Lower leg skin (tissue), 4 donors: ENCODE measurements at regions of chr9 and their contacts with region 1.

Region 1: DNA sequence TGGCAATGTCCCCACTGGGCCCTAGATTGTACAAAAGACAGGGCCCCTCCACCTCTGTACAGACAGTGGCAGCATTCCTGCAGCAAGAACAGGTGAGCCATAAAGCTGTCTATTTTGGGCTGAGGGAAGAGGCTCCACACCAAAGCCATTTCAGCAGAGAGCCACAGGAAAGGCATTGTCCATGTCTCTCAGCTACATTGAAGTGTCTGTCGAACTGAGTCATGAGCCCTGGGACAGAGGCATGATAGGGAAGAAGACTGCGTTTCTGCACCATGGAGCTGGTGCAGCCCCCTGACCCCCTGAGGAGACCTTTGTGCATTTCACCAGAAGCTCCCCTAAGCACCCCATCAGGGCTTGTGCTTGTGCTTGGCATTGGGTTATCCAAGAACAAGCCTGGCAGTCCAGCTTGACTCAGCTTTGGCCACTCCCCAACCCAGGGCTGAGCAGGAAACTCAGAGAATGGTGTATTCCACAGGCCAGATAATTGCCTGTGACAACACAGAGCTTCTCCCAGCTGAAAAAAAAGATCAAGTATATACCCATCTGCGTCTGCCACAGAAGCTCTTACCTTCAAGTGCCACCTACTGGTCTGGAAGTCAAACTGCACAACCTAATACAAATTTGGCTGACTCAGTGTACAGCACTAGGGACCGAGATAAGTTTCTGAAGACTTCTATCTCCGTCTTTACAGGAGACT is 5.9 kb upstream of the FRMD3 start:
- DNase-seq: no peak
- H3K4me3 ChIP-seq: no peak overlapping the region
- CTCF ChIP-seq: peak in 1 of 3 donors; percentile 26
- POLR2A ChIP-seq: no peak

Region 2: GRCh38 chr9:83334320-83334719 is 209.8 kb before region 1 on chr9:
- intact Hi-C with region 1: loop called (anchors 5 kb)
- DNase-seq: peak; percentile 65 to 94
- H3K4me3 ChIP-seq: no peak overlapping the region
- CTCF ChIP-seq: no peak
- POLR2A ChIP-seq: no peak

Region 3: GRCh38 chr9:83511051-83511450 is 33.1 kb before region 1 on chr9:
- intact Hi-C with region 1: no loop called
- DNase-seq: no peak
- H3K4me3 ChIP-seq: no peak overlapping the region
- CTCF ChIP-seq: no peak
- POLR2A ChIP-seq: no peak

Region 4: GRCh38 chr9:83688921-83689320 is 144.8 kb after region 1 on chr9:
- intact Hi-C with region 1: no loop called
- DNase-seq: no peak
- H3K4me3 ChIP-seq: no peak overlapping the region
- CTCF ChIP-seq: no peak
- POLR2A ChIP-seq: no peak